Thyroid gland (tissue), 4 donors: ENCODE measurements at regions of chr14 and their contacts with region 1.

Region 1: GRCh38 chr14:22099942-22100763 is 426.5 kb upstream of the OR4E1 start:
- DNase-seq: peak; percentile 84 to 85
- H3K4me3 ChIP-seq: no peak overlapping the region
- H3K27ac ChIP-seq: no peak overlapping the region
- H3K4me1 ChIP-seq: no peaks in the 10 kb centered on the region
- H3K27me3 ChIP-seq: no peaks in the 10 kb centered on the region
- CTCF ChIP-seq: peak in 5 of 6 experiments; percentile 56 to 98 (median 82)
- POLR2A ChIP-seq: no peak

Region 2: GRCh38 chr14:22002860-22003309 is 97.3 kb before region 1 on chr14:
- intact Hi-C with region 1: no loop called
- DNase-seq: peak; percentile 15 to 18
- H3K4me3 ChIP-seq: no peak overlapping the region
- H3K27ac ChIP-seq: no peak overlapping the region
- H3K4me1 ChIP-seq: no peaks in the 10 kb centered on the region
- H3K27me3 ChIP-seq: no peaks in the 10 kb centered on the region
- CTCF ChIP-seq: peak in 3 of 6 experiments; percentile 16 to 43 (median 22)
- POLR2A ChIP-seq: no peak

Region 3: GRCh38 chr14:22039938-22040775 is 60.0 kb before region 1 on chr14:
- intact Hi-C with region 1: loop called (anchors 5 kb)
- DNase-seq: peak; percentile 56 to 61
- H3K4me3 ChIP-seq: no peak overlapping the region
- H3K27ac ChIP-seq: no peak overlapping the region
- H3K4me1 ChIP-seq: no peaks in the 10 kb centered on the region
- H3K27me3 ChIP-seq: no peaks in the 10 kb centered on the region
- CTCF ChIP-seq: peak; percentile 40 to 72 (median 60)
- POLR2A ChIP-seq: no peak

Region 4: DNA sequence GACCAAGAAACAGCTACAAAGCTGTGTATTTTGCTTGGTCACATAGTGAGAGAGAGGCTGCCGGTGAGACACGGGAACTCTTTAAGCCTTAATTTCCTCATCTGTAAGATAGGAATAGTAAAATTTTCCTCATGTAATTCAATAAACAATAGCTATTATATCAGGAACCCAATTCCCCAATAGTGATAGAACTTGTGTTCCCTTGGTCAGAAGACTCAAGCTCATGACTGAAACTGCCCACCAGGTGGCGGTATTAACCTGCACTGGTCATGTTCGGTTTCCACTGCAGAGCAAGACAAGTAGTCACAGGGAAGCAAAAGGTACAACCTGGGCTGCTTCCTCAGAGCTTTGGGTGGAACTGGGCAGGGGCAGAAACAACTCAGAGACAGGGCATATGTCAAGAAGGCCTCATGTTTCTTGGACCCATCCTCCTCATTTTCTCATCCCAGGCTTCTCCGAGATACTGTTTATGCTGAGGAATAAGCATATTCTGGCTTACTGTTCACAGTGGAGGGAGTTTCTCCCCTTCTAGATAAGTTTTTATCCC is 886.4 kb after region 1 on chr14:
- intact Hi-C with region 1: no loop called
- DNase-seq: peak; percentile 92 to 95
- H3K4me3 ChIP-seq: no peak overlapping the region
- H3K27ac ChIP-seq: no peak overlapping the region
- H3K4me1 ChIP-seq: peaks cover 4 to 10% of the 10 kb centered on the region in 2 donors
- H3K27me3 ChIP-seq: no peaks in the 10 kb centered on the region
- CTCF ChIP-seq: peak; percentile 78 to 96 (median 91)
- POLR2A ChIP-seq: no peak